ENCODE measurements at regions of chr1 and their contacts with region 1.

Region 1: GRCh38 chr1:234925440-234926263 is 203.0 kb downstream of the TOMM20 start:
- DNase-seq: peak; percentile 40
- H3K4me3 Mint-ChIP-seq: peak overlapping the region; percentile 39
- H3K27ac Mint-ChIP-seq: peak overlapping the region; percentile 75
- H3K4me1 Mint-ChIP-seq: peaks cover 50% of the 10 kb centered on the region
- H3K27me3 Mint-ChIP-seq: no peaks in the 10 kb centered on the region

Region 2: DNA sequence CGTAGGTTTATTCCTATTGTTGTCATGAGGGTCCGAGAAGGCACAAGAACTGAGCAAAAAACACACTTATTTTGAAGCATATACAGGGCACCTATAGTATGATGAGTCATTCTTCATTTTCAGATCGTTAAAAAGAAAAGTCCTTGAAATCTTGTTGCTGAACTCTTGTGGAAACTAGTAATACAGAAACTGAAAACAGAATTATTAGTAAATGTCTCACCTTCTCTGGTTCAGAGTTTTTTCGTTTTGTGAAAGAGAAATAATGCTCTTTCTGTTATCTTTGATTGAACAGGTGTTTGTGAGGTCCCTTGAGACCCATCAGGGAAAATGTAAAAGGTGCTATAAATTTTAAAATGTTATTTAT is 654.4 kb before region 1 on chr1:
- CTCF ChIA-PET with region 1: no interaction called
- intact Hi-C with region 1: loop called (anchors 5 kb)
- DNase-seq: peak; percentile 22
- H3K4me3 Mint-ChIP-seq: no peak overlapping the region
- H3K27ac Mint-ChIP-seq: no peak overlapping the region
- H3K4me1 Mint-ChIP-seq: peaks cover 26% of the 10 kb centered on the region
- H3K27me3 Mint-ChIP-seq: peaks cover 28% of the 10 kb centered on the region

Region 3: GRCh38 chr1:234517110-234517802 is 408.4 kb before region 1 on chr1:
- CTCF ChIA-PET with region 1: no interaction called
- intact Hi-C with region 1: loop called (anchors 1 kb)
- DNase-seq: no peak
- H3K4me3 Mint-ChIP-seq: no peak overlapping the region
- H3K27ac Mint-ChIP-seq: no peak overlapping the region
- H3K4me1 Mint-ChIP-seq: peaks cover 24% of the 10 kb centered on the region
- H3K27me3 Mint-ChIP-seq: no peaks in the 10 kb centered on the region

Region 4: DNA sequence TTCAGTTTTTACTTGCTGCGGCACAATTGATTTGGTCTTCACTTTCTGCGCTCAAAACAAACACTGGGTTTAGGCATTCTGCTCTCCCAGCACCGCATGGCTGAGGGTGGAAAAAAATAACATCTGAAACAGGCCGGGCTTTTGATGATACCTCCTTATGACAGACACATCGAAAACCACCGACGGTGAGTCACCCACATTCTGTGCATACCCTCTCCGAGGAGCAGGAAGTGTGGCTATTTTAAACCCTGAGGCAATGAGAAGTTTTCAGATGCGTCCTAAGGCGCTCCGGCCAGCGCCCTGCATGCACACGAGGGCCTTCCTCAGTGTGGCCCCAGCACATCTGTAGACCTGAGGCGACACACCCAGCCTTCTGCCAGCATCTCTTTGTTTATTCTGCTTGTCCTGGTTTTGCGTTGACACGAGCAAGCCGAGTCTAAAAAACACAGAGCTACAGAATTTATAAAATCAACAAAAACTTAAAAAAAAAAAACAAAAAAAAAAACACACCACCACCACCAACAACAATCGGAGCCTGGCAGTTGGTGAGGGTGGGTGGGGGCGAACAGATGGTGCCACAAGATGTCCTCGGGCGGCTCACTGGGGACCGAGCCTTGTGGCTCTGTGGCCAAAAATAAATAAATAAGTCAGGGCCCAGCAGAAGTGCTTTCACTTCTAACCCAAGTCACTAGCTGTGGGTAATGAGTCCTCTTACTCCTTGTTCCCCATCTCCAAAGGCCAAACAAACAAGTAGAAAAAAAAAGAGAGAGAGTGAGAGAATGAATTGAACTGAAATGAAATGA is 153.1 kb before region 1 on chr1:
- CTCF ChIA-PET with region 1: interaction called, 6 read pairs
- intact Hi-C with region 1: loop called (anchors 2 kb)
- DNase-seq: peak; percentile 97
- H3K4me3 Mint-ChIP-seq: peak overlapping the region; percentile 61
- H3K27ac Mint-ChIP-seq: peak overlapping the region; percentile 92
- H3K4me1 Mint-ChIP-seq: peaks cover 59% of the 10 kb centered on the region
- H3K27me3 Mint-ChIP-seq: no peaks in the 10 kb centered on the region

Region 5: GRCh38 chr1:234881893-234882771 is 43.5 kb before region 1 on chr1:
- CTCF ChIA-PET with region 1: no interaction called
- intact Hi-C with region 1: loop called (anchors 1 kb)
- DNase-seq: peak; percentile 40
- H3K4me3 Mint-ChIP-seq: no peak overlapping the region
- H3K27ac Mint-ChIP-seq: peak overlapping the region; percentile 33
- H3K4me1 Mint-ChIP-seq: peaks cover 37% of the 10 kb centered on the region
- H3K27me3 Mint-ChIP-seq: no peaks in the 10 kb centered on the region

Region 6: DNA sequence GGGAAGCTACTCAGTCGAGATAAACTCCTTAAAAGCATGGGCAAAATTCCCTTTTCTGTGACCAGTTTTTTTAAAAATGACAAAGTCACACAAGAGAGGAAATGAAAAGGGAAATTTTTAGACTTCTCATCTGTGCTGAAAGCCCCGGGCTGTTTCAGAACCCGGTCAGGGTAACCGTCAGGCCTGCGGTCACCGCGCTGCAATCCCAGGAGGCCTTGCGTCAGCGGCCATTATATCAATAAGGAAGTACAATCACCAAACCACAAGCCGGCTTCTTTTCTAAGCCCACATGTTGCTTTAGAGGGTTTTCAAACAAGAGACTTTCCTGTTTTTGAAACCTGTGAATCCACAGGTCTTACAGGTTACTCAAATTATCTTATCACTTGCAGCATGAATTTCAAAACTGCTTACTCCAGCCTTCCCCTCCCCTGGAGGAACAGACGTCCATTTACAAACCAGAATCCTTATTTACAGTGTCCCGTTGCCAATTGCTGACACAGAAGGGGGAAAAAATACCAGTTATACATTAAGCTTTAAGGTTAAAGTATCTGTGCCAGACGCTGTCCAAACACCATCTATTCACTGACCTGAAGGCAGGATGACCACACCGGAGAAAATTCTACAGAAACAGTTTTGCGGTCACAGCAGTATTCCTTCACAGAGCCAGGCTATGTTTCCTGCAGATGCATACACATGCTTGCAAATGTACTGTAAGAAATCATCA is 37.7 kb after region 1 on chr1:
- CTCF ChIA-PET with region 1: interaction called, 3 read pairs
- intact Hi-C with region 1: loop called (anchors 1 kb)
- DNase-seq: peak; percentile 98
- H3K4me3 Mint-ChIP-seq: peak overlapping the region; percentile 35
- H3K27ac Mint-ChIP-seq: peak overlapping the region; percentile 97
- H3K4me1 Mint-ChIP-seq: peaks cover 72% of the 10 kb centered on the region
- H3K27me3 Mint-ChIP-seq: no peaks in the 10 kb centered on the region

Region 7: DNA sequence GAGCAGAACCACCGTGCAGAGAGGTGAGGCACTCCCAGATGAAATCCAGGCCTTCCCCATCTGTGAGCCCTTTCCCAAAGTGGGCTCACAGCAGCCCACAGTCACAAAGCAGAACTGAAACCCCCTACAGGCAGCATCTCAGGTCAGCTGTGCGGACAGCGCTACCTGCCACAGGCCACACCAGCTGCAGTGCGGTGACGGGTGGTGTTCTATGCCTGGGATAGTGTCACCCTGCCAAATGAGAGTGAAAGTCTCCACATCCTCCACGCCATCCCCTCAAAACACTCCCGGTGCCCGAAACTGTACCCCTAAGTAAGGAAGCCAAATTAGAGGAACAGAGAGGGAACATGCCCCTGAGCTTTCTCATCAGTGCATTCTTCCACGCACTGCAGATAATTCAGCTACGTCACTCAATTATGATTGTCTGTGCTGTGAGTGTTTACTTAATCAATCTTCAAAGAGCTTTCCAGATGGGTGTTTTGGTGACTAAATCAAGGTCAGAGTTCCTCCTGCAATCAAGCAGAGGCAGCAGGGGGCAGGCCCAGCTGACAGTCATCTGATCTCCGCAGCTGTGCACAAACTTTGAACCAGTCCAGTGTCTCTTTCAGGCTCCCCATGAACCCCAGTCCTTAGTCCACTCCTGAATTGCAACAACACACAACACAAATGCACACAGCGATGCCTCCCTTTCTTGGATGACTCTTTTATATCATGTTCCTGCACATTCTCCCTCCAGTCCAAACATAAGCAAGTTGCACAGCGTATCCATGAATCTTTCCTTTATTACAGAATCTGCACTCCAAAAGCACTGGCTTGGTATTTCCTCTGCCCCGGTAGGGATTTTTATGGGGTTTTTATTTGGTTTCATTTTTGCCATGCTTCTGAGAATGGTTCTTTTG is 53.0 kb after region 1 on chr1:
- CTCF ChIA-PET with region 1: interaction called, 3 read pairs
- intact Hi-C with region 1: loop called (anchors 1 kb)
- DNase-seq: peak; percentile 81
- H3K4me3 Mint-ChIP-seq: peak overlapping the region; percentile 79
- H3K27ac Mint-ChIP-seq: peak overlapping the region; percentile 97
- H3K4me1 Mint-ChIP-seq: peaks cover 59% of the 10 kb centered on the region
- H3K27me3 Mint-ChIP-seq: no peaks in the 10 kb centered on the region

Region 8: DNA sequence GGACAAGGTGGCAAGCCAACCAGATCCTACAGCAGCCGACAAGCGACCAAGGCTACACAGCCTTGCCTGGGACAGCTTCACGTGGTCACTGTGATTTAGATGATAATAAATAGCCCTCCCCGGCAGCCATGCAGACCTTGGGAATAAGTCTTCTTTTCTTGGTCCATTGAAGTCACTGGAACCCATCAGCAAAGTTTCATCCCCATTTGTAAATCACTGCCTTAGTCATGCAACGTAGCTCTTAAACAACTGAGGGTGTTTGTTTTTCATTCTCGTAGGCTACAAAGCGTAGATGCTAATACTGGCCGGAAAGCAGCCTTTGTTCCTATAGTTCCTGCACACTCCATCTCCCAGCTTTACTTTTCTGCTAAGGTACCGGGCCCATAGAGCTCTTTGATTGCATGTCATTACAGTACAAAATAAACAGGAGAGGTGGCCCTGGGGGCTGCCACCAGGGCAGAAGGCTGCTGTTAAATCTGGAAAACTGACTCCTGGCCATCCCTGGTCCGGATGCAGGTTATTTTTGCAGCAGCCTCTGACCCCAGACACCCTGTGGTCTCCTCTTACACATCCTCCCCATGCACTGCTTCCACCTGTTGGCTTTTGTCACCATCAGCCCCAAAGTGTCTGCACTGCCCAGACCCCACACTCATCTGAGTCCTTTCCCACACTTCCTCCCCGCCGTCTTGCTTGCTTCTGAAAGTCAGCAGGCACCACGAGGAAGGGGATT is 97.5 kb after region 1 on chr1:
- CTCF ChIA-PET with region 1: no interaction called
- intact Hi-C with region 1: no loop called
- DNase-seq: peak; percentile 35
- H3K4me3 Mint-ChIP-seq: no peak overlapping the region
- H3K27ac Mint-ChIP-seq: no peak overlapping the region
- H3K4me1 Mint-ChIP-seq: peaks cover 35% of the 10 kb centered on the region
- H3K27me3 Mint-ChIP-seq: no peaks in the 10 kb centered on the region

Region 9: DNA sequence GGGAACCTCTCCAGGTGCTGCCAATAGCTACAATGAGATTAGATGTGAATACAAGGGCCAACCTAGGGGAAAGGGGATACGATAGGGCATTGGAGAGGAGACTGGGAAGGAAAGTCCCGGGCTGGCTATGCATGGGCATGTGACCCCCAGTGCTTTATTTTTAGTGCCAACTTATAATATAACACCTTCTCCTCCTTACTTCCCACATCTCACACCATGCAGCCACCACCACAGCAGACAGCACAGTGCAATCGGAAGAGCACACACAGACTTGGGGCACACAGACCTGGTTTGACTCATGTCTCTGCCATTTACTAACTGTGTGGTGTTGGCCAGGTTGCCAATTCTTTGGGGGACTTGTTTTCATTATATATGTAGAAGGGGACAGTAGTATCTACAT is 117.6 kb after region 1 on chr1:
- CTCF ChIA-PET with region 1: no interaction called
- intact Hi-C with region 1: no loop called
- DNase-seq: no peak
- H3K4me3 Mint-ChIP-seq: no peak overlapping the region
- H3K27ac Mint-ChIP-seq: no peak overlapping the region
- H3K4me1 Mint-ChIP-seq: peaks cover 27% of the 10 kb centered on the region
- H3K27me3 Mint-ChIP-seq: no peaks in the 10 kb centered on the region